BJ (cell line): ENCODE measurements at regions of chr2 and their contacts with region 1.

Region 1: DNA sequence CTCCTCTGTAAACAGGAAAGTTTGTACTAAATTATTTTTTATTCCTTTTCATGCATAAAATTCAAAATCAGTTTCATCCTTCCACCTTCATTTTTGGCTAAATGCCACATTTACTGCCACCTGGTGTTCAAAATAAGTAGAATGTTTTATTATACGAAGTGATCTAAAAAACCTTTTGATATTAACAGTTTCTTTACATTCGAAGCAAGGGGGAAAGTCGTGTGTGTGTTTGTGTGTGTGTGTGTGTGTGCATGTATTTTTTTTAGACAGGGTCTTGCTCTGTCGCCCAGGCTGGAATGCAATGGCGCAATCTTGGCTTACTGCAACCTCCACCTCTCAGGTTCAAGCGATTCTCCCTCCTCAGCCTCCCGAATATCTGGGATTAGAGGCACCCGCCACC is 9.0 kb upstream of the SCN9A start:
- DNase-seq: no peak
- H3K4me3 ChIP-seq: no peak overlapping the region
- H3K27me3 ChIP-seq: no peaks in the 10 kb centered on the region
- CTCF ChIP-seq: peak; percentile 39

Region 2: DNA sequence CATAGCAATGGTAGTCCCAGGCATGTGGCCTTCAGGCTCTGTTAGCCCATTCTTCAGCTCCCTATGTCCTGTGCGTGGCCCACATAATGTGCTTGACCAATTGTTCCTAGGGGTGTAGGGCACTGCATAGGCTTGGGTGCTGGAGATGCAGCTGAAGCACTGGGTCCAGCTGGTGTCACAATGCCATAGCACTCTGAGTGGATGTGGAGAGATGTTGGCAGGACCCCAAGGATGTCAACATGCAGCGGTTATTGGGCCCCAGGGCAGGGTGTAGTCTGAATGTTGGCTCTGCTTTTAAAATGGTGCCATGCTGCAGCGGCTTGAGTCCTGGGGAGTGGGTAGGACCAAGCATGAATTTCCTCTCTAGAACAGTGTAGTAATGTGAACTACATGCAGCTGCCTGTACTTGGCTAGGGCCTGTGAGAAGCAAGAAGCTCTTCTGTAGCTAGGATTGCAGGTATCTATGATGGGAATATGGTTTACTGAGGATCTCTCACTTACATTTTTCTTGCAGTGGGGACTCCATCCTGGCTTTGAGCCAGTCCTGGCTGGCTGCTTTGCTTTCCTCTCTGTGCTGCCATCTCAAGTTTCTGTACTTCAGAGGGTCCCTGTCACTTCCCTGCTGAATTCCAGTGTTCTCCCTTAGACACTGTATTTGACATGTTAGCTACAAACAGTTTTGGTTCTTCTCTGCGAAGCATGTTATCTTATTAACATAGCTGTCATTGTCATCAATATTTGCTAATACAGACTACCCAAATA is 766.9 kb before region 1 on chr2:
- CTCF ChIA-PET with region 1: no interaction called
- POLR2A ChIA-PET with region 1: no interaction called
- DNase-seq: no peak
- H3K4me3 ChIP-seq: no peak overlapping the region
- H3K27me3 ChIP-seq: no peaks in the 10 kb centered on the region
- CTCF ChIP-seq: no peak

Region 3: DNA sequence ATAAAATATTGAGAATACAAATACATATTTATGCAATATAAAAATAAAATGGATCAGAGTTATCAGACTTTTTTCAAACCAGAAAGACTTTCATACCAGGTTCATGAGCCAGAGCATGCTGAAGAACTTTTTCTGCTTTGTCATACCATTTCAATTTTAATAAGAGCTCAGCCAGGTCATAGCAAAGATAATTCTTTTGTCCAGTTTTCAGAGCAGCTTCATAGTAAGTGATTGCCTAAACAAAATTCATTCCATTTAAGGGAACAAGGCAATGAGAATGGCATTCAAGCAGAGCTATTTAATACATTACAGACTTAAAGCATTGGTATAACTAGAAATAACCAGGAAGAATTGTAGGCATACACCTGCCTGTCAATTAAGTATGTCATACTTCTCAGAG is 473.5 kb before region 1 on chr2:
- CTCF ChIA-PET with region 1: no interaction called
- POLR2A ChIA-PET with region 1: no interaction called
- DNase-seq: peak; percentile 45
- H3K4me3 ChIP-seq: no peak overlapping the region
- H3K27me3 ChIP-seq: no peaks in the 10 kb centered on the region
- CTCF ChIP-seq: no peak

Region 4: GRCh38 chr2:166112193-166112605 is 272.6 kb before region 1 on chr2:
- CTCF ChIA-PET with region 1: no interaction called
- POLR2A ChIA-PET with region 1: no interaction called
- DNase-seq: no peak
- H3K4me3 ChIP-seq: no peak overlapping the region
- H3K27me3 ChIP-seq: no peaks in the 10 kb centered on the region
- CTCF ChIP-seq: no peak

Region 5: DNA sequence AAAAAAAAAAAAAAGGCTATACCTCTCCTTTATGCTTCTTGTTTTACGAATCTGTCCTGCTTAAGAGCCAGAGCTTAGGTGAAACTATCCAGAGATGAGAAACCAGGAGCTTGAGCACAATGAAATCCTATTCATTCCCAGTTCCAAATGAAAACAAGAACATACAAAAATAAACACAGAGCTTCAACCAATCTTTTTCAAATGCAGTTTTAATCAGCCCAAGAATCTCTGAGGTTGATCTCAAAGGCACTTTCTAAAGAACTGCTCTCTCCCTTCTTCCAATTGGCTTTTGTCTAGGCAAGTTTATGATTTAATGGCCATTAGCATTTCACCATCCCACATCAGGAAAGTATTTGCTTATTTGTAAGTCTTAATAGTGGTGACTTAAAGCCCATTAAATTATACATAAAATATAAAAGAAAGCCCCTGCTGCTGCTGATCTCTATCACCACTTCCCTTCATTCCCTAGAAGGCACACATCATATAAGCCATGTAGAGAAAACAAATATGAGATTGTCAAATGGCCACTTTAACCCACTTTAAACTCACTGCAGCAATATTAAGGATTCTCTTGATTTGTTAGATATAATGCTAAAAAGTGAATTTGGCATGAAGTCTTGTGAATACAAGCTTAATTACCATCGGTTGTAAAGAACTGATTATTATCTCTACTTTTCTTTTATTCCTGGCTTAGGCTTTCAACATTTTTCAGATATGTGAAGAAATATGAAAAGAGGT is 20.2 kb after region 1 on chr2:
- CTCF ChIA-PET with region 1: interaction called, 15 read pairs
- POLR2A ChIA-PET with region 1: interaction called, 3 read pairs
- DNase-seq: peak; percentile 26
- H3K4me3 ChIP-seq: no peak overlapping the region
- H3K27me3 ChIP-seq: no peaks in the 10 kb centered on the region
- CTCF ChIP-seq: no peak